Calu3 (cell line): ENCODE measurements at regions of chr2 and their contacts with region 1.

Region 1: DNA sequence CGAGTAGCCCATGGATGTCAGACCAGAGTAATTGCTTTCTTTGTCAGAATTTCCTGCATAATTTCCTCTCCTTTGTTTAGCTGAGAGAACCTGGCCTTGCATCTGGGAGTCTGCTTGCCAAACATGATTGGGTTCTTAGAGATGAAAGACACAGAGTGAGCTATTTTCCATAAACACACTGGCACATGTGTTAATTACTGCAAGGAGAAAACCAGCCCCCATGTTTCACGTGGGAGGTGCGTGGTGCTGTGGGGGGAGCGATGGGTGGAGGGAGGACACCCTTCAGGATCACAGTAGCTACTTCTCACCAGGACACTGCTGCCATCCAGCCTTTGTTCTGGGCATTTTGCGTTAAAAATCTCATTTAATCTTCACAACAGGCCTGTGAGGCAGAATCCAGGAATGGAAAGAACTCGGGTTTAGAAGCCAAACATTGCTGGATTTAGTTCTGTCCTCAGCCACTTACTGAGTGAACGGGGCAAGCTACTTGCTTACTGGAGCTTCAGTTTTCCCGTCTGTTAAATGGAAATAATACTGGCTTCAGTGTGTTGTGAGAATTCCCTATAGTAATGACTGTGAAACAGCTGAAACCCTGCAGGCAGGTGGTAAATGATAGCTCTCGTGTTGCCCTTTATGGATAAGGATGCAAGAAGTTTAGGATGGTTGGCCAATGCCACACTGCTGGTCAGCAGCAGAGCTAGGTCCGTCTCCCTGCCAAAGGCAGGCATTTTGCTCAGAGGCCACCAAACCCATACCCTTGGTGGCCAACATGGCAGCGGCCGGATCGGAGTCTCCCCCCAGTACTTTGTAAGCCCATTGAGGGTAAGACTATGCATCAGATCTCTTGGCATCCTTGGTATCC is 100.0 kb upstream of the ASAP2 start:
- DNase-seq: no peak
- H3K4me3 Mint-ChIP-seq: no peak overlapping the region
- H3K27ac Mint-ChIP-seq: no peak overlapping the region
- H3K4me1 Mint-ChIP-seq: peaks cover 26% of the 10 kb centered on the region
- H3K27me3 Mint-ChIP-seq: no peaks in the 10 kb centered on the region
- CTCF ChIP-seq: no peak

Region 2: GRCh38 chr2:9003616-9004337 is 102.8 kb before region 1 on chr2 and contains the start of gene MBOAT2:
- CTCF ChIA-PET with region 1: no interaction called
- intact Hi-C with region 1: loop called (anchors 5 kb)
- DNase-seq: peak; percentile 92
- H3K4me3 Mint-ChIP-seq: peak within 1 kb of the TSS; percentile 92
- H3K27ac Mint-ChIP-seq: peak within 1 kb of the TSS; percentile 84
- H3K4me1 Mint-ChIP-seq: peaks cover 34% of the 10 kb centered on the region
- H3K27me3 Mint-ChIP-seq: no peaks in the 10 kb centered on the region
- CTCF ChIP-seq: no peak
- total RNA-seq, gene MBOAT2: 36.8 and 40.9 TPM in 2 replicates

Region 3: GRCh38 chr2:9201185-9201891 is 94.8 kb after region 1 on chr2:
- CTCF ChIA-PET with region 1: no interaction called
- intact Hi-C with region 1: no loop called
- DNase-seq: no peak
- H3K4me3 Mint-ChIP-seq: no peak overlapping the region
- H3K27ac Mint-ChIP-seq: peak overlapping the region; percentile 65
- H3K4me1 Mint-ChIP-seq: peaks cover 40% of the 10 kb centered on the region
- H3K27me3 Mint-ChIP-seq: no peaks in the 10 kb centered on the region
- CTCF ChIP-seq: no peak